AG04449 (cell line): ENCODE measurements at regions of chr10 and their contacts with region 1.

Region 1: DNA sequence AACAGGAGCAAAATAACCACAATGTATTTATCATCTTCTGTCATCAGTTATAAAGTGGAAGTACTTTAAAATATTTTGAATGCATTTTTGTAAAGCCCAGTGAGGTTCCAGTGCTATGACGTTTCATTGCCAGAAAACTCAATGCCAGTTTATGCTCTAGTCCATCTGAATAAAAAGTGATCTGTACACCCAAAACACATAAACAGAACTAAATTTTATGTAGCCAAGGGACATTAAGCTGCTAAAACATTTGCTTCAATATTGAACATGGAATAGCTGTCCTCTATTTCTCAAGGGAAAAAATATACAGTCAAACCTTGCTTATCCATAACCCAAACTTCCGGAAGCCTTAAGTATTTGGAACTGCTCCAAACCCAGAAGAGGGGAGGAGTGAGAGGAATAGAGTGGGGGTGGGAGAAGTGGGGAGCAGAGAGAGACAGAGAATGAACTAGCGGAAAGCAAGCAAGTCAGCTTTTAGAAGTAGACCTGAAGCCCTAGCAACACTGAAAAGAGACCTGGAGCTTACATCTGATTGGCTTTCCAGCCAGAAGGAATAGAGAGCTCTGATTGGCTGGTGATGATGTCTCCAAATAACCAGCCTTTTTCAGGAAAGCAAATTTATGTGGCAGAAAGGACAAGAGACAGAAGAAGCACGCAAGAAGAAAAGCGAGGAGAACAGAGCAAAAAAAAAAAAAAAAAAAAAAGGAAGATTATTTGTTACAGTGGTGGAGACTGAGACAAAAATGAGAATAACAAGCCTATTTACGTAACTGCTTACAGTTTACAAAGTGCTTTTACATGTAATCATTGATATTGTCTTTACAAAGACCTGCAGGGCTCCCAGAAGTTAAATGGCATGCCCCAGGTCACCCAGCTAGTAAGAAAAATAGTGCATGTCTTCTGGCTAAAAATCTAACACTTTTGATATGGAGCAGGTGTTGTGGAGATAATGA is 196.0 kb downstream of the RNLS start:
- DNase-seq: no peak
- H3K4me3 ChIP-seq: no peak overlapping the region
- CTCF ChIP-seq: no peak

Region 2: DNA sequence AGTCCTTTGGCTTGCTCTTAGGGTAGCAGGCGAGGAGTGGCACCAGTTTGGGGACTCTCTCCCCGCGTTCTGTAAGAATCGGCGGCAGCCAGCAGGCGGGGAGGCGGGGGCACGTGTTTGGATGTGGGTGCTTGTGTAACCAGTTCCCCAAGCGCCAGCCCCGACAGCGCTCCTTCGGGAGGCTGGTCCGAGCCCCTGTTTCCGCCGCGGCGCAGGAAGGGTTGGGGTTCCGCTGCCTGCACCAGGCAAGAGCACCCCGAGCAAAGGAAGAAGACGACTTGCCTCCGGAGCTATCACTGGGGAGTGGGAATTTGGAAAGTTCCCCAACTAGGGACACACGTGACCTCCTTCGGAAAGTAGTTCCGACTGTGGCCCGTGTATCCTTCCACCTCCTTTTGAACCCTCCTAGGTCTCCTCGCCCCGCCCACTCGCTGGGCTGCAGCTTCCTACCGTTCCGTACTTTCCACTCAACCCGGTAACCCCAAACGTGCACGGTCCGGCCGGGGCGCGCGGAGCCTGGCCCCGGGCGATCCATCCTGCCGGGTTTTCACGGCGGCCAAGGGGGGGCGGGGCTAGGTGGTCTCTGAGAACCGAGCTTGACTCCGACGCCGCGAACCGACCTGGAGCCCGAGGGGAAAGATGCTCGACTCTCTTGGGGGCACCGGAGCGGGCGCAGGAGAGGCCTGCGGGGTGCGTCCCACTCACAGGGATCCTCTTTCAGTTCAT is 525.0 kb before region 1 on chr10:
- CTCF ChIA-PET with region 1: interaction called, 304 read pairs
- POLR2A ChIA-PET with region 1: interaction called, 12 read pairs
- DNase-seq: peak; percentile 83
- H3K4me3 ChIP-seq: peak overlapping the region; percentile 91
- CTCF ChIP-seq: peak; percentile 11

Region 3: DNA sequence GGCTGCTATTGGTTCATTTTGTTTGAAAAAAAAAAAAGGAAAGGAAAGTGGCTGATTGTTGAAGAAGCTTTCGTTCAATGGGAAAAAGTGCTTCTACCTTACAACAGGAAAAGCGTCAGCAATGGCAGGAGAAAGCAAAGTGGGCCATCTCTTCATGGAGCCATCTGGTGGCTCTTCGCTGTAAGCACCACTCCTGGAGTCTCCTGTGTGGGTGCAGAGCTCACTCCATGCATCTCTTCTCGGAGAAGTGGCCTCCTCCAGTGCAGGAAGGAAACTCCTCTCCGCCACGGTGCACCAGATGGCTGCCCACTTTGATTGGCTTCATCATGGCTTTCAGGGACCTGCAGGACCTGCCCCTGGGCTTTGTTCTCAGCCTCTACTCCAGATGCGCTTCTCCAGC is 272.7 kb before region 1 on chr10:
- CTCF ChIA-PET with region 1: interaction called, 14 read pairs
- POLR2A ChIA-PET with region 1: no interaction called
- DNase-seq: no peak
- H3K4me3 ChIP-seq: no peak overlapping the region
- CTCF ChIP-seq: peak; percentile 31

Region 4: GRCh38 chr10:88256013-88256680 is 130.9 kb before region 1 on chr10:
- CTCF ChIA-PET with region 1: no interaction called
- POLR2A ChIA-PET with region 1: no interaction called
- DNase-seq: no peak
- H3K4me3 ChIP-seq: no peak overlapping the region
- CTCF ChIP-seq: no peak

Region 5: DNA sequence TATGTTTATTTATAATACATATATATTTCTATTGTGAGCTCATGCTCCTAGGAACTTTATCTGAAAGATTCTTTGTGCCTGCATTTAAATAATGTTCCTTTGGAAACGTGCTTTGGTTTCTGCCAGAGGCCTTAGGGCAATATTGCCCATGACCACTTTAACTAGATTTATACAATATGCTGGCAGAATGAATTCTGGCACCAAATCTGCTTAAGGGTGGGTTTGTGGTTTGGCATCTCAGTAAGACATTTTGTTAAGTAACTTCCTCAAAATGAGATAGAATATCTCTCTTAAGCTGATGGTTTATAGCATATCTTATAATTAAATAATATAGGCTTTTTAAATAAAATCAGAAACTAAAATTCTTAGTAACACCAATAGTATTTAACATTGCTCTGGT is 56.9 kb before region 1 on chr10:
- CTCF ChIA-PET with region 1: no interaction called
- POLR2A ChIA-PET with region 1: no interaction called
- DNase-seq: no peak
- H3K4me3 ChIP-seq: no peak overlapping the region
- CTCF ChIP-seq: no peak

Region 6: DNA sequence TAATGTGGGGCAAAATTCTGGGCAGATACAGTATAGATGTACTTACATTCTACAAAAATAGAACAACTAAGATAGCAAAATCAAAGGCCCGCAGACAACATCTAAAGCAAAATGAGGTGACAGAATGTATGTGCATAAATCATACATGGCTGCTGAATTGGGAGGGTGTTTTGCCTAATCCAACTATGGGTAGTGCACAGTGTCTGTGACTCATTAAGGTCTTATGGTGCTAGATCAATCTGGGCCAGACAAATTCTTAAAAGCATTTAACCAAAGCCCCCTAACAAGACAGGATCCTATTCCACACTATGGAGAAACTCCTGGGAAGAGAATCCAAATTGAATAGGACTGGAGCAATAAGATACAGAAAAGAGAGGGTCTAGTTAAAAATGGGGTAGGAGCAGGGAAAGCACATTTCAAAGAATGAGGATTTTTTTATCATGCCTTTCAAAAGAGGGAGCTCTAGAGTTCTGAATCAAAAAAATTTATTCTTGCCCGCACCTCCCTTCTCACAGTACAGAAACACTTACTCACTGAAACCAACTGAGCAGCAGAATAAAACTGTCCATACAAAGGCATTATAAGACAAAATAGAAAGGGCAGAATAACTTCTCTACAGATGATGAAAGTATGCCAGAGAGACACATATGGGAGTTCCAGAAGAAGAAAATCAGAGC is 14.7 kb after region 1 on chr10:
- CTCF ChIA-PET with region 1: interaction called, 39 read pairs
- POLR2A ChIA-PET with region 1: no interaction called
- DNase-seq: no peak
- H3K4me3 ChIP-seq: no peak overlapping the region
- CTCF ChIP-seq: peak; percentile 23